Cardiac septum (tissue), 1 donor: ENCODE measurements at regions of chr20 and their contacts with region 1.

Region 1: DNA sequence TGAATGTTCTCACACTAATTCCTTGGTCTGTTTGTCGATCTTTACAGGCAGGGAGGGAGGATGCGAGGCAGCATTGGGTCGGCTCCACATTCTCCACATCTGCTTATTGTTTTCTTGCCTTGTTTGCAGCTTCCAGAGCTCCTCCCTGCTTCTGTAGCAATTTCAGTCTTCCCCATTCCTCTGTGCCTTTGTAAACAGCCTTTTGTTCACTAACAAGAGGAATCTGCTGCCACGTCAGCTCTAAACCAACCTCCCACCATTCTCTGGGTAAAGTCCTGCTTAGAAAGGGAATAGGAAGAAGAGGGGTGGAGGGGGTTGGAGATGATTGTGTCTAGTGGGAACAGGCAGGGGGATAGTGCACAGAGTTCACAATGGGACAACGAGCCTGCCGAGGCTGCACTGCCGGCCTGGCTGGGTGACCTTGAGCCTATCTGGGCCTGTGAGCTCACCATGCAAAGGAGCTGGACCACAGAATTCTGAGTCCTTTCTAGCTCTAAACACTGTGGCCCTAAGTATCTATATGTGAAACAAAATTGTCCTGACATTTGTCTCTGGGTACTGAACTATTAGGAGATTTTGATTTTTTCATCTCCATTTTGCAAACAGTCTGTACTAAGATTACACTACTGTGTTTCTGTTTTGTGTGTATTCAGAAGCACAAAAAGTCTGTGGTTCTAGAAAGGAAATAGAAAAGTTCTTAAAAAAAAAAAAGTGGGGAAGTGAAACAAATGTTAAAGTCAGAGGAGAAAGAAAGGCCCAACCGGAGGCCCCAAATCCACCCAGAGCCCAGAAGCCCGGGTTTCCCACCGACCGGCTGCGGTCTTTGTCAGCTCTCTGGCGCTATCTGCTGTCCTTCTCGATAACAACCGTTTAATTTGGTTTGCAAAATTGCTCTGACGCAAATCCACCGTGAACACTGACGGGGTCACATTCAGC is 1.4 kb upstream of the PRND start:
- DNase-seq: peak; percentile 85

Region 2: DNA sequence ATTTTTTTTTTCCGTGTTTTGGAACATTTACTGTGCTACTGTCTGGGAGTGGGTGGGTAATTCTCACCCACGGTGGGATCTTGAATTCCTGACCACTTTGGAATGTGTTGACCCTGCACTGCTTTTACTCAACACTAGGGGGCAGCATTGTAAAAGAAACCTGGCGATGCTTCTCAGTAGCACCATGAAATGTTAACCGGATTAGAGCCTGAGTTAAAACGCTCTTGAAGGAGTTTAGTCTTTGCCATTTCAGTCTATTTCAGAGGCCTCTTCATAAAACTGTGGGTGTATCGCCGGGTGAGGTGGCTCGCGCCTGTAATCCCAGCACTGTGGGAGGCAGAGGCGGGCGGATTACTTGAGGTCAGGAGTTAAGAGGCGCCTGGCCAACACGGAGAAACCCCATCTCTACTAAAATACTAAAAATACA is 113.0 kb before region 1 on chr20:
- intact Hi-C with region 1: loop called (anchors 1 kb)
- DNase-seq: no peak

Region 3: GRCh38 chr20:4684837-4685413 is 35.4 kb before region 1 on chr20:
- intact Hi-C with region 1: loop called (anchors 5 kb)
- DNase-seq: no peak

Region 4: DNA sequence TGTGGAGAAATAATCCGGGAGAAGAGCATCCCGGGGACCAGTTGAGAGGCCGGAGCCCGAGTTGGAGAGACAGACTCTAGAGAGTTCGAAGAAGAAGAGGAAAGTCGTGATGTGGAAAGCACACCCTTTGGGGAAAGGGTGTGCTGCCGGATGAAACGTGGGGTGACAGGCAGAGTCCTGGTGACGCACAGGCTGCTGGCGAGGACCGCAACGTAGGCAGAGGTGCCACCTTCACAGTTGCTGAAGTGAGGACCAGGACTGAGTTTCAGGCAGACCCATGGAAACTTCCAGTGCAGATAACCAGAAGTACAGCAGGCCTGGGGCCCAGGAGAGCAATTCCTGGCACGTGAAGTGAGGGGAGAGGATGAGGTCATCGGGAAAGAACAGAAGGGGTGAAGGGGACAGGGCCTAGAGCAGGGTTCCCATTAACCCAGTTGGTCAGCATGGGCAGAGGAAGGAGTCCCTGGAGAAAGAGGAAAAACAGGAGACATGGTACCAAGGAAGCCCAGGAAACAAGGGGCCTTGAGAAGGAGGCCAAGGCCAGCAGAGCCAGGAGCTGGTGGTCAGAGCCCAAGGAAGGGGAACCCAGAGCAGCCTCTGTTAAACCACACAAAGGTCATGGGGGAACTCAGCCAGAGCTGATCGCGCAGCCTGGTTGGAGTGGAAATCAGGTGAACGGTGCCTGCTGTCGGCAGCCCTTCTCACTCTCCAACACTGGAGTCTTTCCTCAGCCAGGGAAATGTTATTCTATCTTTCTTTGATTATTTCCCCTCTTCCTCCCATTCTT is 85.5 kb after region 1 on chr20:
- intact Hi-C with region 1: no loop called
- DNase-seq: no peak